ENCODE measurements at regions of chr19 and their contacts with region 1.

Region 1: DNA sequence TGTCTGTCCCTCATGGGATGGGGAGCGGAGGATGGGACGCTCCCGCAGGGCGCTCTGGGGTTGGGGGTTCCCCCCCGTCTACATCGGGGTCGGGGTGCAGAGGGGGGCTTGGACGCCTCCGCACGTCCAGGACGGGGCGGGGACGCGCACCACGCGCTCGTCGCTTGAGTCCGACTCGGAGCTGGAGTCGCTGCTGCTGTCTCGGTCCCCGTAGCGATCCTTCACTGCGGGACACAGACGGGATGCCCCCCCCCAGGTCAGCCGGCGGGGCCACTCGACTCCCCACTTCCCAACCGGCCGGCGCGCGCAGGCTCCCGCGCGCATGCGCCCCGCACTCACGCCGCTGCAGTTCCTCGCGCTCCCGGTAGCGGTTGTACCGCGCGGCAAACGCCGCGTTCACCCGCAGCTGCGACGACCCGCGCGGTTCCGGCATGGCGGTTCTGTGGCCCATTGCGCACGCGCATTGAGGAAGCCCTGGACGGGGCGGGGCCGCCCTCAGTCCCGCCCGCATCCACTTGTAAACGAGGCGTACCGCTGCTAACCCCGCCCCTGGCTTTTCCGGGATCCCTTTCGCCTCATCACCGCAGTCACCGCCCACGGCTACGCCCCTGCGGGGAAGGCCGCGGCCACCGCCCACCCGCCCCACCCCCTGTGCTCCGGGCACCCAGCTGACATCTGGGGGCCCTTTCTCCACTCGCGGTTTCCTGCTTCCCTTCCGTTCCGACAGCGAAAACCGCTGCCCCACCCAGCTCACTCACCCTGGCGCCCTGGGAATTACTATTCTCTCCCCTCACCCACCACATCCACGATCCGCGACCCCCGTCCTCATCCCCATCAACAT is at the start of gene KRI1:
- DNase-seq: peak; percentile 98
- H3K4me3 ChIP-seq: peak within 1 kb of the TSS; percentile 75 to 99 (median 78)
- H3K27ac ChIP-seq: peak within 1 kb of the TSS; percentile 64
- H3K4me1 ChIP-seq: peaks cover 27% of the 10 kb centered on the region
- H3K27me3 ChIP-seq: no peaks in the 10 kb centered on the region
- CTCF ChIP-seq: peak; percentile 10 to 55
- POLR2A ChIP-seq: peak; percentile 92
- total RNA-seq, gene KRI1: 23.1 and 25.7 TPM in 2 replicates

Region 2: GRCh38 chr19:10416380-10417257 is 149.2 kb before region 1 on chr19:
- CTCF ChIA-PET with region 1: no interaction called
- POLR2A ChIA-PET with region 1: no interaction called
- dilution Hi-C with region 1: no loop called
- intact Hi-C with region 1: loop called (anchors 5 kb)
- DNase-seq: peak; percentile 73
- H3K4me3 ChIP-seq: peak overlapping the region; percentile 4 to 44 (median 25)
- H3K27ac ChIP-seq: no peak overlapping the region
- H3K4me1 ChIP-seq: peaks cover 14% of the 10 kb centered on the region
- H3K27me3 ChIP-seq: peaks cover 34 to 38% of the 10 kb centered on the region in 2 experiments
- CTCF ChIP-seq: peak; percentile 89 to 90
- POLR2A ChIP-seq: no peak

Region 3: DNA sequence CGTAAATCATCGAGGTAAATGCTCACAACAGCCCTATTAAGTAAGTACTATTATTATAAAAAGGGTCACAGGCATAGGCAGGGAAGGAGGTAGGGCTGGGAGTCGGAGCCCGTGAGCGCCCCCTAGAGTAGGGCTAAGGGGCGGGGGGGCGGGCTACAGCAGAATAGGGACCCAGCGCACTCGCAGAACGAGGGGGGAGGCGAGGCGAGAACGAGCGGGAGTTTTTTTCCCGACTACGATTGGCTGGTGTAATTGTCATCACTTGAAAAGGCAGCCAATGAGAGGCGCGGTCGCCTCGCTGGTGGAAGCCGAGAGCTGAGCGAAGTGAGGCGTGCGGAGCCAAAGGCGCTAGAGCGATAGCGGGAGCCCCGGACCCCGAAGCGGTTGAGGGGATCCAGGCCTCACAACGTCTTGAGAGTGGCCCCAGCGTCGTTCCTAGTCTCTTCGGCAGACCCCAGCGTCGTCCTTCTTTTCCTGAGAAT is 86.8 kb before region 1 on chr19:
- CTCF ChIA-PET with region 1: interaction called, 6 read pairs
- POLR2A ChIA-PET with region 1: no interaction called
- dilution Hi-C with region 1: no loop called
- intact Hi-C with region 1: loop called (anchors 2 kb)
- DNase-seq: peak; percentile 95
- H3K4me3 ChIP-seq: peak overlapping the region in 1 of 3 experiments; percentile 11
- H3K27ac ChIP-seq: no peak overlapping the region
- H3K4me1 ChIP-seq: peaks cover 7% of the 10 kb centered on the region
- H3K27me3 ChIP-seq: no peaks in the 10 kb centered on the region
- CTCF ChIP-seq: peak in 1 of 2 donors; percentile 71
- POLR2A ChIP-seq: no peak

Region 4: GRCh38 chr19:10653715-10654492 is 88.1 kb after region 1 on chr19 and contains the start of gene ILF3:
- CTCF ChIA-PET with region 1: no interaction called
- POLR2A ChIA-PET with region 1: interaction called, 3 read pairs
- dilution Hi-C with region 1: no loop called
- intact Hi-C with region 1: loop called (anchors 1 kb)
- DNase-seq: peak; percentile 100
- H3K4me3 ChIP-seq: peak within 1 kb of the TSS; percentile 94 to 99 (median 94)
- H3K27ac ChIP-seq: peak within 1 kb of the TSS; percentile 78
- H3K4me1 ChIP-seq: peaks cover 10% of the 10 kb centered on the region
- H3K27me3 ChIP-seq: no peaks in the 10 kb centered on the region
- CTCF ChIP-seq: no peak
- POLR2A ChIP-seq: peak; percentile 92
- total RNA-seq, gene ILF3: 425 and 459 TPM in 2 replicates

Region 5: DNA sequence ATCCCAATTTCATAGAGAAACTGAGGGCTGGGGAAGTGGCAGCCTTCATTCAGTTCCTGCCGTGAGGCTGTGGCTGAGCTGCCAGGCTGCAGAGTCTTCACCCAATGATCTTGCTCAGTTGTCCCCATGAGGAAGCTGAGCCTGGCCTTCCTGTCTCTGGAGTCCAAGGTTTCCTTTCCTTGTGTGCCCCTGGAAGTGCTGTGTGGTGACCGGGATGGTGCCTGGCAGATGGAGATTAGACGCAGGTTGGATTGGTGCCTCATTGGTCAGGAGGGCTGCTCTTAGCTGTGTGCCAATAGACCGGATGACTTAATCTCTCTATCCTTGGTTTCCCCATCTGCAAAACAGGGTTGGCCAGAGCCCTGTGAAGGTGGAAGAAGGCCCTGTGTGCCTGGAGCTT is 176.7 kb after region 1 on chr19:
- CTCF ChIA-PET with region 1: no interaction called
- POLR2A ChIA-PET with region 1: no interaction called
- dilution Hi-C with region 1: no loop called
- intact Hi-C with region 1: no loop called
- DNase-seq: peak; percentile 95
- H3K4me3 ChIP-seq: no peak overlapping the region
- H3K27ac ChIP-seq: no peak overlapping the region
- H3K4me1 ChIP-seq: peaks cover 9% of the 10 kb centered on the region
- H3K27me3 ChIP-seq: no peaks in the 10 kb centered on the region
- CTCF ChIP-seq: no peak
- POLR2A ChIP-seq: peak; percentile 61